Heart right ventricle (tissue), 16 donors: ENCODE measurements at regions of chr3 and their contacts with region 1.

Region 1: GRCh38 chr3:65871305-65872141 is 167.2 kb downstream of the MAGI1 start:
- DNase-seq: peak; percentile 42 to 62
- ATAC-seq: peak in 6 of 8 donors; percentile 46 to 69 (median 56)
- H3K4me3 ChIP-seq: no peak overlapping the region
- H3K27ac ChIP-seq: peak overlapping the region in 1 of 10 donors; percentile 21
- H3K4me1 ChIP-seq: peaks cover 0 to 47% (median 13%) of the 10 kb centered on the region in 9 donors
- H3K27me3 ChIP-seq: no peaks in the 10 kb centered on the region
- CTCF ChIP-seq: no peak

Region 2: DNA sequence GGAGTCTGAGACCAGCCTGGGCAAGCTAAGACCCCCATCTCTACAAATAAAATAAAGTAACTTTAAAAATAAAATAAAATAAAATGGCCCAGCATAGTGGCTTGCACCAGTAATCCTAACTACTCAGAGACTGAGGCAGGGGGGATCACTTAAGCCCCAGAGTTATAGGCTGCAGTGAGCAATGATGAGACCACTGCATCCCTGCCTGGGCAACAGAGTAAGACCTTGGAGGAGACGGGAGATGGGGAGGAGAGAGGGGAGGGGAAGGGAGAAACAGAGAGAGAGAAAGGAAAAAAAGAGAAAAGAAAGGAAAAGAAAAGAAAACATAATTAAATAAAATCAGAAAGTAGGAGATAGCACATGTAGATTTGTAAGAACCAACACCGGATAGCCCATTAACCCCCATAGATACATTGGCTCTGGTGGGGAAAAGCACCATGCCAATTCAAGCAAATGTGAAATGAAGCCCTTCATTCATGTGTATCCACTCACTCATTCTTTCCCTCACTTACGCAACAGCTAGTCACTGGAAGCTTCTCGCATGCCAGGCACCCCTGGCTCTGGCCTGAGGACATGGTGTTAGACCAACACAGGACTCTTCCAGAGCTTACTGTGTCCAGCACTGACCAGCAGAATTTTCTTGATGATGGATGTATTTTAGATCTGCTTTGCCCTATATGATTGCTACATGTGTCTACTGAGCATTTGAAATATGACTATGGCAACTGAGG is 16.0 kb before region 1 on chr3:
- intact Hi-C with region 1: loop called in 1 of 10 experiments (anchors 1 kb)
- DNase-seq: no peak
- ATAC-seq: no peak
- H3K4me3 ChIP-seq: no peak overlapping the region
- H3K27ac ChIP-seq: no peak overlapping the region
- H3K4me1 ChIP-seq: peaks cover 0 to 32% (median 20%) of the 10 kb centered on the region in 9 donors
- H3K27me3 ChIP-seq: no peaks in the 10 kb centered on the region
- CTCF ChIP-seq: no peak